GM12878 (cell line): ENCODE measurements at regions of chr22 and their contacts with region 1.

Region 1: DNA sequence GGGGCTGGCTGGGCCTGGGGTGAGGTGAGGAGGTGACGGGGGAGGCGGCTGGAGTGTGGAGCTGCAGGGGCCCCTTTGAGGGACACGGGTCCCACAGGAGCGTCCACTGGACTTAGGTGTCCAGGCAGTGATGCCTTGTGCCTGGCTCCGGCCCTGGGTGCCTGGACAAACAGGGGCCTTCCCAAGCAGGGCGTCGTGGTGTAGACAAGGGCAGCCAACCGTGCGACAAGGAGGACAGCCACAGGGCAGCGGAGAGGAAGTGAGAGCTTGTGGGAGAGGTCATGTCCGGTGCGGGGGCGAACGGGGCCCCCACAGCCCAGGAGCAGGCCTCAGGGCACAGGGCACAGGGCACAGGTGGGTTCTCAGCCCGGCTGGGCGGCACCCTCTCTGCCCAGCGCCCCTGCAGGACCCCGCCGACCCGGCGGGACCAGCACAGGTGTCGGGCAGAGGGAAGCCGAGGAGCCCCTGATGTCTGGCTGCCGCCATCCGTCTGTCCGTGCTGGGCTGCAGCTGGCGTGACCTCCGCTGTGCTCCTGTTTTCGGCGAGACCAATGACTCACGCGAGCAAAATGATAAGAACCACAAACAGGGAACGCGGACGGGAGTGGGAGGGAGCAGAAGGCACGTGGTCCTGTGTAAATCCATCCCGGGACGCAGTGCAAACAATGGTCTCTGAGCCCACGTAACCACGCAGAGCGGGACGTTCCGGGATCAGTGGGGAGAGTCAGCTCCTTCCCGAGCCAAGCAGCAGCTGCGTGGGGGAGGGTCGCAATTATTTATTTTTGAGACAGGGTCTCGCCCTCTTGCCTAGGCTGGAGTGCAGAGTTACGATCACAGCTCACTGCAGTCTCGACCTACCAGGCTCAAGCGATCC is 49.1 kb upstream of the A4GALT start:
- DNase-seq: peak; percentile 44
- ATAC-seq: peak; percentile 92
- H3K4me3 ChIP-seq: peak overlapping the region; percentile 28; the same call in 1 of the 2 replicates
- H3K27ac ChIP-seq: peak overlapping the region; percentile 70
- H3K4me1 ChIP-seq: peaks cover 43% of the 10 kb centered on the region
- H3K27me3 ChIP-seq: no peaks in the 10 kb centered on the region; a peak in 1 of 4 replicates
- CTCF ChIP-seq: no peak
- EP300 ChIP-seq: peak; percentile 75 to 82
- POLR2A ChIP-seq: 0 out of 2 replicates have a peak, but pooled peaks have one; percentile 23
- RAD21 ChIP-seq: no peak

Region 2: DNA sequence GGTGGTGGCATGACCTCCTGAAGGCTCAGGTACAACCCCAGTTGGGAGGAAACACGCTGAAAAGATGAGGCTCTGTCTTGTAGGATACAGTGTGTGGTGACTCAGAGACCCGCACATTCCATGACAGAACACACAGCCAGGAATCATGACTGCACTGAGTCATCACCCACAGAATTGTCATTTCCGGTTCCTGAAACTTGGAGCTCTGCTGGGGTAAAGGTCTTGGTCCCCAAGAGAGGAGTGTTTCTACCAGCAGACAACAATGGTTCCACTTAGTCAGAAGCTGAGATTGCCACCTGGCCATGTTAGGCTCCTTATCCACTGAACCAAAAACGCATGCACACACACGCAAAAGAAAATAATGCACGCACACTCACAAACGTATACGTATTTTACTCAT is 89.2 kb before region 1 on chr22:
- CTCF ChIA-PET with region 1: no interaction called
- POLR2A ChIA-PET with region 1: no interaction called
- RAD21 ChIA-PET with region 1: no interaction called
- SMC1A ChIA-PET with region 1: no interaction called
- in situ Hi-C with region 1: no loop called
- intact Hi-C with region 1: no loop called
- DNase-seq: no peak
- ATAC-seq: no peak
- H3K4me3 ChIP-seq: no peak overlapping the region
- H3K27ac ChIP-seq: no peak overlapping the region
- H3K4me1 ChIP-seq: no peaks in the 10 kb centered on the region
- H3K27me3 ChIP-seq: no peaks in the 10 kb centered on the region
- CTCF ChIP-seq: no peak
- EP300 ChIP-seq: no peak
- POLR2A ChIP-seq: no peak
- RAD21 ChIP-seq: no peak

Region 3: GRCh38 chr22:42754658-42755057 is 15.2 kb before region 1 on chr22:
- CTCF ChIA-PET with region 1: interaction called, 7 read pairs
- POLR2A ChIA-PET with region 1: interaction called, 26 read pairs
- RAD21 ChIA-PET with region 1: interaction called, 24 read pairs
- SMC1A ChIA-PET with region 1: interaction called, 13 read pairs
- in situ Hi-C with region 1: no loop called
- intact Hi-C with region 1: no loop called
- DNase-seq: no peak
- ATAC-seq: no peak
- H3K4me3 ChIP-seq: no peak overlapping the region
- H3K27ac ChIP-seq: no peak overlapping the region
- H3K4me1 ChIP-seq: peaks cover 22% of the 10 kb centered on the region
- H3K27me3 ChIP-seq: no peaks in the 10 kb centered on the region
- CTCF ChIP-seq: no peak
- EP300 ChIP-seq: no peak
- POLR2A ChIP-seq: no peak
- RAD21 ChIP-seq: no peak

Region 4: DNA sequence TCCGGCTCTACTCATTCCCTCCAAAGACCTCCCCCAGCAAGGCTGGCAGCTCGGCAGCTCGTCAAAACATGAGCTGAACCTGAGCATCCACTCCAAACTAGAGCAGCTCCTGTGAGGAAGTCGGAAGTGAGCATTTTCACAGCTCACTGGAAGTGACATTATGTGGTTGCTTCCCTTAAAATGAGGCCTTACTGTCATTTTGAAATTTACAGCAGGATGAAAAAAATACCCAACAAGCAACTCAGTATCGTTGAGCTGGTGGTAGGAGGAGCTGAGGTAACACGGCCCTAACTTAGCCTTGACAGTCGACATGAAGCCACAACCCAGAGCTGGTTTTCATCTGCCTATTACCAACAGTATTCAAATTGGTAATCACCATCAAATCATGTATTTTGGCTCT is 125.3 kb after region 1 on chr22:
- CTCF ChIA-PET with region 1: no interaction called
- POLR2A ChIA-PET with region 1: no interaction called
- RAD21 ChIA-PET with region 1: no interaction called
- SMC1A ChIA-PET with region 1: no interaction called
- in situ Hi-C with region 1: no loop called
- intact Hi-C with region 1: no loop called
- DNase-seq: peak; percentile 76
- ATAC-seq: peak; percentile 81
- H3K4me3 ChIP-seq: no peak overlapping the region
- H3K27ac ChIP-seq: peak overlapping the region; percentile 69
- H3K4me1 ChIP-seq: peaks cover 68% of the 10 kb centered on the region
- H3K27me3 ChIP-seq: no peaks in the 10 kb centered on the region
- CTCF ChIP-seq: no peak
- EP300 ChIP-seq: no peak
- POLR2A ChIP-seq: no peak
- RAD21 ChIP-seq: no peak